ENCODE measurements at regions of chr2 and their contacts with region 1.

Region 1: DNA sequence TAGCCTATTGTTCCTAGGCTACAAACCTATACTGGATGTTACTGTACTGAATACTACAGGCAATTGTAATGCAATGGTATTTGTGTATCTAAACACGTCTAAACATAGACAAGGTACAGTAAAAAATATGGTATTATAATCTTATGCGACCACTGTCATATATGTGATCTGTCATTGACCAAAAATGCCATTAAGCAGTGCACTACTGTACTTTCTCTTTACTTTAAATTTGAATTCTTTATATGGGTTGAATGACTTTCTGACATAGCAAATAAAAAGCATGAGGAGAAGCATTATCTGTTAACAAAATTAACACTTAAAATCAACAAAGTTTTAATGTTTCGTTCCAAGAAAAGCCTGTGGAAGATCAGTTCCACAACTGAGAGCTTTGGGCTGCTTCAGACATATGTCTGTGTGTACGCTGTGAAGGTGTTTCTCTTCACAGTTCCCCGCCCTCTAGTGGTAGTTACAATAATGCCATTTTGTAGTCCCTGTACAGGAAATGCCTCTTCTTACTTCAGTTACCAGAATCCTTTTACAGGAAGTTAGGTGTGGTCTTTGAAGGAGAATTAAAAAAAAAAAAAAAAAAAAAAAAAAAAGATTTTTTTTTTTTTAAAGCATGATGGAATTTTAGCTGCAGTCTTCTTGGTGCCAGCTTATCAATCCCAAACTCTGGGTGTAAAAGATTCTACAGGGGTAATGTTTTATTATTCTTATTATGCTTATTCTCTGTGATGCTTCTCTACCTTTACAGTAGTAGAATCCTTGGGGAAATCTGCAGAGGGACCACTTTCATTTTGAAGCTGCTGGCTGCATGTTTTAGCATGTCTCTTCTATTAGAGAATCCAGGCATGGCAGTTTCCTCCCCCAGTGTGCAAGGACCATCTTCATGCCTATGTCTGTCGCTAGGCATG is 54.5 kb downstream of the SCN2A start:
- DNase-seq: no peak
- H3K4me3 Mint-ChIP-seq: no peak overlapping the region
- H3K27ac Mint-ChIP-seq: no peak overlapping the region
- H3K4me1 Mint-ChIP-seq: peaks cover 2% of the 10 kb centered on the region
- H3K27me3 Mint-ChIP-seq: peaks cover 4% of the 10 kb centered on the region

Region 2: DNA sequence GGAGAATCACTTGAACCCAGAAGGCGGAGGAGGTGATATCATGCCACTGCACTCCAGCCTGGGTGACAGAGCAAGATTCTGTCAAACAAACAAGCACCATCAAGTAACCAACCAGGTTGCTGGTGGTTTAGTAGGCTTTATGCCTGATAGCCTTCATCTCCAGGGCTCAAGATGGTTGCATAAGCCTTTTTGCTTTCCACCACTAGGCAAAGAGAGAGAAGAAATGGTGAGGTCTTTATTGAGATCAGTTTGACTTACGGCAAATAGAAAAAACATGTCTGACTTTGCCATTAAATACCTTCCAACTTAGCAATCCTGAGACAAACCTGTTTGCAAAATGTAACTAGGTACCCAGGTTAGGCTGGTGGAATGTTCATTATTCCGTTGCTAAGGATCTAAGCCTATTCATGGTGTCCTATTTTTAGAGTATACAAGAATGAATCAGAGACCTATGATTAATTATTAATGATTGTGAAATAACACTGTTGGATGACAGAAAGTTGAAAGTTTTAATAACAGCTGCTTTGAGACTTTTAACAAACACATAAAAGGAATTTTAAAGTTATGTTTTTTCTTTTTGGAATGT is 284.9 kb before region 1 on chr2:
- CTCF ChIA-PET with region 1: no interaction called
- POLR2A ChIA-PET with region 1: no interaction called
- intact Hi-C with region 1: no loop called
- DNase-seq: no peak
- H3K4me3 Mint-ChIP-seq: no peak overlapping the region
- H3K27ac Mint-ChIP-seq: no peak overlapping the region
- H3K4me1 Mint-ChIP-seq: no peaks in the 10 kb centered on the region
- H3K27me3 Mint-ChIP-seq: peaks cover 11% of the 10 kb centered on the region

Region 3: GRCh38 chr2:165239230-165239629 is 54.5 kb before region 1 on chr2 and contains the start of gene SCN2A:
- CTCF ChIA-PET with region 1: no interaction called
- POLR2A ChIA-PET with region 1: no interaction called
- intact Hi-C with region 1: loop called (anchors 5 kb)
- DNase-seq: no peak
- H3K4me3 Mint-ChIP-seq: no peak within 1 kb of the TSS
- H3K27ac Mint-ChIP-seq: no peak within 1 kb of the TSS
- H3K4me1 Mint-ChIP-seq: no peaks in the 10 kb centered on the region
- H3K27me3 Mint-ChIP-seq: no peaks in the 10 kb centered on the region
- total RNA-seq, gene SCN2A: not detected

Measured in activated CD4-positive, alpha-beta memory T cell treated with anti-CD3 and anti-CD28 coated beads for 36 hours (primary cell).